Activated B cell treated with CpG ODN at 0.5 μM for 24 hours (primary cell): ENCODE measurements at regions of chr22 and their contacts with region 1.

Region 1: DNA sequence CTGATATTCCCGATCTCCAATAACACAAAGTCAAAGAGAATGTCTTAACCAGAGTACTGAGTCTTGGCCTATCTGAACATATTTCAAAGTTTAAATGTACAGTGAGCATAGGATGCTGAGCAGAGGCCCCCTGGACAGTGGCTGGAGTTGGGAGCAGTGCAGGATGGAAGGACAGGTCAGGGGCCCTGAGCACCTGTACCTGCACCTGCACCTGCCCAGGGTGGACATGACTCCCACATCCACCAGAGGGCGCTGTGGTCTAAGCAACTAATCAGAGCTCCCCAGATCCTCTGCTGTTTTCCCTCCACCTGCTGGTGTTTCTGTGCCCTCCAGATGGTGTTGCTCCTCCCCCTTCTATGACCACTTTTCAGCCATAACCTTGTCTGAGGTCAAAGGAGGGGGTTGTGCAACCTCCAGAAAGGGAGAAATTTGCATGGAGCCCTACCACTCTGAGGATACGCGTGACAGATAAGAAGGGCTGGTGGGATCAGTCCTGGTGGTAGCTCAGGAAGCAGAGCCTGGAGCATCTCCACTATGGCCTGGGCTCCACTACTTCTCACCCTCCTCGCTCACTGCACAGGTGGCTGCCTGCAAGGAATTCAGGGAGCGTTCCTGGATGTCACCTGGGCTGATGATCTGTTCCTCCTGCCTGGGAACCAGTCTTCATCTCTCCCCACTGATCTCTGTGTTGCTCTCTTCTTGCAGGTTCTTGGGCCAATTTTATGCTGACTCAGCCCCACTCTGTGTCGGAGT is 49.1 kb upstream of the VPREB1 start:
- DNase-seq: peak; percentile 79
- ATAC-seq: peak; percentile 71
- H3K4me3 Mint-ChIP-seq: peak overlapping the region; percentile 68
- H3K27ac Mint-ChIP-seq: peak overlapping the region; percentile 85
- H3K4me1 Mint-ChIP-seq: peaks cover 59% of the 10 kb centered on the region
- H3K27me3 Mint-ChIP-seq: no peaks in the 10 kb centered on the region
- CTCF ChIP-seq: peak; percentile 80

Region 2: DNA sequence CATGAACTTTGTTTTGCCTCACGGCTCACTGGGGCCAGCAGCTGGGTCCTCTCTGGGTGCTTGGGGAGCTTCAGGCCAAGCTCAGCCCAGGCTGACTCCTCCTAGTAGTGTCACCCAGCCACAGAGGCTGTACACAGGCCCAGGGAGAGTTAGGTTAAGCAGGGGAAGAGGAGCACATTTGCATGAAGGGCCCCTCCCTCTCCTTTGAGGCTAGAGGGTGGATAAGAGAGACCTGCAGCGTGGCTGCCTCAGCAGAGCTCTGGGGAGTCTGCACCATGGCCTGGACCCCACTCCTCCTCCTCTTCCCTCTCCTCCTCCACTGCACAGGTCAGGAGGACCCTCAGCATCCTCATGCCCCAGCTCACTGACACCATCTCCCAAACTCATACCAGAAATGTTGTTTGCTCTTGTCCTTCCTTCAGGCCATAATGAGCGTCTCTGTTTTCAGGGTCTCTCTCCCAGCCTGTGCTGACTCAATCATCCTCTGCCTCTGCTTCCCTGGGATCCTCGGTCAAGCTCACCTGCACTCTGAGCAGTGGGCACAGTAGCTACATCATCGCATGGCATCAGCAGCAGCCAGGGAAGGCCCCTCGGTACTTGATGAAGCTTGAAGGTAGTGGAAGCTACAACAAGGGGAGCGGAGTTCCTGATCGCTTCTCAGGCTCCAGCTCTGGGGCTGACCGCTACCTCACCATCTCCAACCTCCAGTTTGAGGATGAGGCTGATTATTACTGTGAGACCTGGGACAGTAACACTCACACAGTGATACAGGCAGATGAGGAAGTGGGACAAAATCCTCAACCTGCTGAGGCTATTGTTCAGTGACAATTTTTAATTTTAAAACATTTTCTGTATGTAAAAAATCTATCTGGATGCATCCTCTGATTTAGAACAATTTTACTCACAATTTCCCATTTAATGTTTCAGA is 33.3 kb before region 1 on chr22:
- CTCF ChIA-PET with region 1: interaction called, 42 read pairs
- POLR2A ChIA-PET with region 1: interaction called, 73 read pairs
- intact Hi-C with region 1: no loop called
- DNase-seq: peak; percentile 47
- ATAC-seq: peak; percentile 92
- H3K4me3 Mint-ChIP-seq: peak overlapping the region; percentile 85
- H3K27ac Mint-ChIP-seq: peak overlapping the region; percentile 97
- H3K4me1 Mint-ChIP-seq: peaks cover 83% of the 10 kb centered on the region
- H3K27me3 Mint-ChIP-seq: no peaks in the 10 kb centered on the region
- CTCF ChIP-seq: no peak

Region 3: GRCh38 chr22:22168190-22168940 is 27.1 kb before region 1 on chr22:
- CTCF ChIA-PET with region 1: interaction called, 42 read pairs
- POLR2A ChIA-PET with region 1: interaction called, 73 read pairs
- intact Hi-C with region 1: loop called (anchors 1 kb)
- DNase-seq: peak; percentile 31
- ATAC-seq: peak; percentile 54
- H3K4me3 Mint-ChIP-seq: peak overlapping the region; percentile 84
- H3K27ac Mint-ChIP-seq: peak overlapping the region; percentile 97
- H3K4me1 Mint-ChIP-seq: peaks cover 86% of the 10 kb centered on the region
- H3K27me3 Mint-ChIP-seq: no peaks in the 10 kb centered on the region
- CTCF ChIP-seq: no peak

Region 4: DNA sequence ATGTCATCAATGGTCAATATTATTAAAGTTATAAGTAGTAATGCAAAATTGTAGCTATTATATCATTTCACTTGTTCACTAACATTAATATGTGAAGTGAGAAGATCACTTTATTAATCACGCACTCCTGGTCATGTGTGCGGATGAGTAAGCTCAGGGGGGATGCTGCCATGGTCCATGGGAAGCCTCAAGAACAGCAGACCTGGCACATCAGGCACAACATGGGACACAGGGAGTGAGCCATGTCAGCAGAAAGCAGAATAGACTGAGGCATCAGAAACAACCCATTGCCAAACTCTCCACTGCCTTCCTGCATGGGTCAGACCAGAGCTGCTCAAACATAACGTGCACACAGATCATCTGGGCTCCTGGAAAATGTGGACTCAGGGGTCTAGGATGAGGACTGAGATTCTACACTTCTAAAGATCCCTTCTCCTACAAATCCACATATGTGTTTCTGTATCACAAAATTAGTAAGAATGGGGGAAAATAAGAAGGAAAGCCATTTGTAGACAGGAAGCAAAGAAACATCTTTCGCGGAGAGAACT is 14.6 kb before region 1 on chr22:
- CTCF ChIA-PET with region 1: interaction called, 27 read pairs
- POLR2A ChIA-PET with region 1: interaction called, 4 read pairs
- intact Hi-C with region 1: no loop called
- DNase-seq: no peak
- ATAC-seq: no peak
- H3K4me3 Mint-ChIP-seq: no peak overlapping the region
- H3K27ac Mint-ChIP-seq: no peak overlapping the region
- H3K4me1 Mint-ChIP-seq: peaks cover 38% of the 10 kb centered on the region
- H3K27me3 Mint-ChIP-seq: no peaks in the 10 kb centered on the region
- CTCF ChIP-seq: no peak

Region 5: GRCh38 chr22:22235558-22235957 is 40.1 kb after region 1 on chr22:
- CTCF ChIA-PET with region 1: interaction called, 30 read pairs
- POLR2A ChIA-PET with region 1: interaction called, 3 read pairs
- intact Hi-C with region 1: loop called (anchors 1 kb)
- DNase-seq: no peak
- ATAC-seq: no peak
- H3K4me3 Mint-ChIP-seq: peak overlapping the region; percentile 38
- H3K27ac Mint-ChIP-seq: no peak overlapping the region
- H3K4me1 Mint-ChIP-seq: peaks cover 25% of the 10 kb centered on the region
- H3K27me3 Mint-ChIP-seq: peaks cover 2% of the 10 kb centered on the region
- CTCF ChIP-seq: no peak